Dorsolateral prefrontal cortex (tissue), 120 donors: ENCODE measurements at regions of chr16 and their contacts with region 1.

Region 1: GRCh38 chr16:67017810-67018488 is 11.0 kb upstream of the CBFB start:
- DNase-seq: peak; percentile 15 to 86 (median 64)
- H3K4me3 ChIP-seq: no peak overlapping the region
- H3K27ac ChIP-seq: peak overlapping the region in 7 of 59 donors; percentile 6 to 61 (median 34)
- H3K27me3 ChIP-seq: no peaks in the 10 kb centered on the region
- CTCF ChIP-seq: peak; percentile 54 to 89 (median 74)

Region 2: DNA sequence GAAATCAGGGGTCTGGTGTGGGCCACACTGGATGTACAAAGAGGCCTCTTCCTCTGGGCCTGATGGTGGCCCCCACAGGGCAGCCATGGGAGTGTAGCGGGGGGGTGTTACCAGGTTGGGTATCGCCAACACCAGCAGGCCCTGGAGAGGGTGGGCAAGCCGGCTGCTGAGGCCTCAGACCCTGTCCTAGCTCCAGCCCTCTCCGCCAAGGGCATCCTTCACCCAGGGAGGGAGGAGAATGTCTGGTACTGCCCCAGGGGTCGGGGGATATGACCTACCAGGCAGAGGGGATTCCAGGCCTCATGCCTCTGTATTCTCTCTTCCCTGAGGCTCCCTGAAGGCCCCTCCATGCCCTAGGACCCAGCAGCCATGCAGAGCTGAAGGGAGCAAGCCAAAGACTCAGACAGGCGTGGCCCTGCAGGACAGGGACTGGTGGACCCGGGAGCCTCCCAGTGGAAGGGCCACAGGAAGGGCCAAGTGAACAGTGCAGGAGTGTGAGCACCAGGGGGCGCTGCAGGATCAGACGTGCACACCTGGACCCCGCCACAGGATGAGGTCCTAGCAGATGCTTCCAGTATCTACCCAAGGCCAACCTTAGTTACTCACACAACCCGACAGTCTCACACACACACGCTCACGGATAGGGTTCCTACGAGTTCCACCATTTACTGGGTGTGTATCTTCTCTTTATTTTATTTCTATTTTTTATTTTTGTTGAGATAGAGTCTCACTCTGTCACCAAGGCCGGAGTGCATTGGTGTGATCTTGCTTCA is 40.4 kb before region 1 on chr16:
- intact Hi-C with region 1: loop called in 1 of 2 experiments (anchors 2 kb)
- DNase-seq: peak; percentile 84 to 95 (median 91)
- H3K4me3 ChIP-seq: peak overlapping the region in 1 of 59 donors; percentile 32
- H3K27ac ChIP-seq: peak overlapping the region in 15 of 59 donors; percentile 2 to 57 (median 37)
- H3K27me3 ChIP-seq: no peaks in the 10 kb centered on the region
- CTCF ChIP-seq: peak; percentile 80 to 100 (median 98)

Region 3: DNA sequence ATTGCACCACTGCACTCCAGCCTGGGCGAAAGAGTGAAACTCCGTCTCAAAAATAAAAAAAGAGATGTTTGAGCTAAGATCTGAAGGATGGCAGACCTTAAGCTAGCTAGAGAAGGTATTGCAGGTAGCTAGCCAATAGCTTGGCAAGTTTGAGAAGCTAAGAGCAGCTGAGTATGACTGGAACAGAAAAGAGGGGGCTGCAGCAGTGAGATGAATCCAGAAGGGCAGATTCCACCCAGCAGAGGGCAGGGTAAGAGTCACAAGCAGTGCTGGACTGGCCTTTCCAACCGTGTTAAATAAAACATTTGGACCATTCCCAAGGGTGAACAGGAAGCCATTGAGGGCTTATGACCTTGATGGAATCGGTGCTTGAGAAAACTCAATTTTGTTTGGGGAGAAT is 86.1 kb after region 1 on chr16:
- intact Hi-C with region 1: loop called in 1 of 2 experiments (anchors 5 kb)
- DNase-seq: no peak
- H3K4me3 ChIP-seq: no peak overlapping the region
- H3K27ac ChIP-seq: no peak overlapping the region
- H3K27me3 ChIP-seq: no peaks in the 10 kb centered on the region
- CTCF ChIP-seq: peak in 42 of 56 donors; percentile 6 to 55 (median 32)